ENCODE measurements at regions of chr11 and their contacts with region 1.

Region 1: DNA sequence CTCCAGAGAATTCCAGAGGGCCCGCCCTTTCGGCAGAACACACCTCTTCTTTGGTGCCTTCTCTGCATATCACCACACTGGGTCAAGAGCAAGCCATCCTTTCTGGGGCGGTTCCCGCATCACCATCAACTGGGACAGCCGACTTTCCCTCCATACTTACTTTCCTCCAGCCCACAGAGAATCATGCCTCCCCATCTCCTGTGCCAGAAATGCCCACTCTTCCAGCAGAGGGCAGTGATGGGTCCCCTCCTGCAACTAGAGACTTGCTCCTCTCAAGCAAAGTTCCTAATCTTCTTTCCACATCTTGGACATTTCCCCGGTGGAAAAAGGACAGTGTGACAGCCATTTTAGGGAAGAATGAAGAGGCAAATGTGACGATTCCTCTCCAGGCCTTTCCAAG is 157.7 kb downstream of the C11orf91 start:
- H3K4me3 Mint-ChIP-seq: no peak overlapping the region
- H3K27ac Mint-ChIP-seq: no peak overlapping the region
- H3K4me1 Mint-ChIP-seq: no peaks in the 10 kb centered on the region
- H3K27me3 Mint-ChIP-seq: peaks cover 18% of the 10 kb centered on the region

Region 2: GRCh38 chr11:33633241-33633901 is 90.5 kb after region 1 on chr11:
- intact Hi-C with region 1: no loop called
- H3K4me3 Mint-ChIP-seq: no peak overlapping the region
- H3K27ac Mint-ChIP-seq: peak overlapping the region; percentile 58
- H3K4me1 Mint-ChIP-seq: peaks cover 60% of the 10 kb centered on the region
- H3K27me3 Mint-ChIP-seq: peaks cover 10% of the 10 kb centered on the region

Region 3: GRCh38 chr11:33687733-33688479 is 145.0 kb after region 1 on chr11:
- intact Hi-C with region 1: loop called (anchors 1 kb)
- H3K4me3 Mint-ChIP-seq: no peak overlapping the region
- H3K27ac Mint-ChIP-seq: no peak overlapping the region
- H3K4me1 Mint-ChIP-seq: peaks cover 21% of the 10 kb centered on the region
- H3K27me3 Mint-ChIP-seq: peaks cover 17% of the 10 kb centered on the region

Region 4: DNA sequence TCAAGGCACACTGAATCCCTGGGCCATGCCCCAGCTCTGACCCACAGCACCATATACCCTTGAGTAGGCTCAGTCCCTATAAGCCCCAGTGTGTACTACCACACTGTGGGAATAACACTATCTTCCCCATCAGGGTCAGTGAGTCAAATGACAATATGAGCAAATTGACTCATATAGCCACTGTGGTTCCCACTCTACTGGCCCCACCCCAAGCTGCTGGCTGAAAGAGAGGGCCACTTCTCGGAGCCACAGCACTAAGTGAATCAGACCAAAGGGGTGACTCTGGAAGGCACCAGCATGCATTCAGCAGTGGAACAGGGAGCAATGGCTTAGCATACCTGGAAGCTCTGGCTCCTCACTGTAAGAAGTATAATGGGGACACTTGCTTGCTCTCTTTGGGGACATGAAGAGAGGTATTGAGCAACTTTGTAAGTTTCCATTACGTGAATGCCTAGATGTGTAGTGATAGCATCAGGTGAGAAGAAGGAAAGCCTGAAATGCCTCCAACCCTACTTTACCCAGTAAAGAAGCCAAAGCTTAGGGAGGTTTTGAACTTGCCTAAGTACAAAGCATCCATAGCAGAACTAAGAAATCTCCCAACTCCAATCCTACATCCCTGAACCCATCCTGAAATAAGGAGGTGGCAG is 179.8 kb after region 1 on chr11:
- intact Hi-C with region 1: no loop called
- H3K4me3 Mint-ChIP-seq: peak overlapping the region; percentile 65
- H3K27ac Mint-ChIP-seq: peak overlapping the region; percentile 97
- H3K4me1 Mint-ChIP-seq: peaks cover 72% of the 10 kb centered on the region
- H3K27me3 Mint-ChIP-seq: no peaks in the 10 kb centered on the region

Measured in dendritic cell treated with granulocyte-macrophage colony-stimulating factor and Interleukin-4, amounts not matched to agents 40 ng/mL and 50 ng/mL, for 4 days (primary cell).